ENCODE measurements at regions of chr15 and their contacts with region 1.

Region 1: GRCh38 chr15:62306851-62307504 is 141.9 kb upstream of the C2CD4B start:
- DNase-seq: peak; percentile 72
- H3K4me3 ChIP-seq: peak overlapping the region in 1 of 2 experiments; percentile 17; a peak in 1 of 4 replicates
- H3K27ac ChIP-seq: peak overlapping the region; percentile 28 to 61; a peak in 2 of 4 replicates
- H3K4me1 ChIP-seq: peaks cover 8 to 15% of the 10 kb centered on the region in 2 experiments
- H3K27me3 ChIP-seq: no peaks in the 10 kb centered on the region
- CTCF ChIP-seq: peak; percentile 78
- EP300 ChIP-seq: no peak
- RAD21 ChIP-seq: peak; percentile 92

Region 2: DNA sequence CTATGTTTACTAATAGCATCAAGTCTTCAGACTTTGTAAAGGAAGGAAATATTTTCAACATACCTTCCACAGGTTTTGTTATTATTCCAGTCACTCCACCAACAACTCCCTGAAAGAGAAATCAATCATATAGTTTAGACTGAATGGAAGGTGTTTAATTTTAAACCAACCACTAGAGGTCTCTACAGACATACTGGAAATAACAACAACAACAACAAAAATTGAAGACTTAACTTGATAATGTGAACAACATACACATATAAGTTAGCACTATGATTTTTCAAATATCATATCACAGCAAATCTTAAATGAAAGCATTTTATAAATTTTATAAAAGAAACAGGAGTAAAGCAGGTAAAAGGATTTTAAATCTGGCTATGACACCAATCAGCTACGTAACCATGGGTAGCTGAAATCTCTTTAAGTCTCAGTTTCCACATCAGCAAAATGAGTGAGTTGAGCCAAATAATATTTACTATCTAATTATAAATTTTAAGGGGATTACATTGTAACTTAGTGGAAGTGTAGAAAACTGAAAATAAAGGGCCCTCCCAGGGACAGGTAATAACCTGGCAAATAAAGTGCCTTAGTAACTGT is 435.0 kb before region 1 on chr15:
- CTCF ChIA-PET with region 1: interaction called, 17 read pairs
- POLR2A ChIA-PET with region 1: no interaction called
- DNase-seq: peak; percentile 11
- H3K4me3 ChIP-seq: no peak overlapping the region
- H3K27ac ChIP-seq: no peak overlapping the region
- H3K4me1 ChIP-seq: no peaks in the 10 kb centered on the region
- H3K27me3 ChIP-seq: no peaks in the 10 kb centered on the region
- CTCF ChIP-seq: peak; percentile 80
- EP300 ChIP-seq: no peak
- RAD21 ChIP-seq: peak; percentile 79

Region 3: DNA sequence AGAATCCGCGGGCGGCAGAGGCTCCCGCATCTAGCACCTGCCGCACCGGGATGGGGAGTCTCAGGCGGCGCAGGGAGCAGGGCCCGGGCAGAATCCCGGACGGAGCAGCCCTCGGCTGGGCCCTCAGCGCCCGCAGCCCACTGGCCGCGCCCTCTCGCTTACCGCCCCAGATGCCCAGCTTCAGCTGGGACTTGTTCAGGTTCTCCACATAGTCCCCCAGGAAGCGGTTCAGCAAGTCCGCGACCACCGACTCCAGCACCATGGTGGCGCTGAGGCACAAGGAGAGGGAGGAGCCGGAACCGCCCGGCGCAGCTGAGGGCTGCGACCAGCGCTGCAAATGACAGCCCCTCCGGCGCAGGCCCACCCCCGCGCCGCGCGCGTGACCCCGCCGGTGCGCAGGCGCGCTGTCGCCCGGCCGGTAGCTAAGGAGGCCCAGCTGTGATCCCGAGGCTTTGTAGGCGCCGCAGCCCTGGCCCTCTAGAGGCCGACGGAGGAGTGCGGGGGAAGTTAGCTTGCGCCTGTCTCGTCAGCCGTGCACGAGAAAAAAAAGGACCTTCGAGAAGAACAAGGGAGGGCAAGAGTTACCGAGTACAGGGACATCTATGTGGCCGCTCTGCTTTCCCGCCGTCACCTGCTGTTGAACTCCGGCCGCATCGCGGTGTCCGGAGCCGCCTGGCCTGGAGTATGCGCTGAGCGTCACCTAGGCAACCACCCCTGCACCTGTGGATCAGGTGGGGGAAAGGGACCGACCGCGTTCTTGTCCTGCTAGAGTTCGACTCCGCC is 246.7 kb before region 1 on chr15 and contains the start of gene VPS13C:
- CTCF ChIA-PET with region 1: interaction called, 27 read pairs
- POLR2A ChIA-PET with region 1: no interaction called
- DNase-seq: peak; percentile 98
- H3K4me3 ChIP-seq: peak within 1 kb of the TSS; percentile 74 to 92
- H3K27ac ChIP-seq: peak within 1 kb of the TSS; percentile 76 to 91
- H3K4me1 ChIP-seq: peaks cover 0 to 7% of the 10 kb centered on the region in 2 experiments; a peak in 2 of 4 replicates
- H3K27me3 ChIP-seq: no peaks in the 10 kb centered on the region
- CTCF ChIP-seq: peak; percentile 75
- EP300 ChIP-seq: 0 out of 4 replicates have a peak, but pooled peaks of 1 of the 2 experiments have one; percentile 12
- RAD21 ChIP-seq: peak; percentile 66
- polyA plus RNA-seq, gene VPS13C: 5.7 and 6.9 TPM in 2 replicates

Region 4: DNA sequence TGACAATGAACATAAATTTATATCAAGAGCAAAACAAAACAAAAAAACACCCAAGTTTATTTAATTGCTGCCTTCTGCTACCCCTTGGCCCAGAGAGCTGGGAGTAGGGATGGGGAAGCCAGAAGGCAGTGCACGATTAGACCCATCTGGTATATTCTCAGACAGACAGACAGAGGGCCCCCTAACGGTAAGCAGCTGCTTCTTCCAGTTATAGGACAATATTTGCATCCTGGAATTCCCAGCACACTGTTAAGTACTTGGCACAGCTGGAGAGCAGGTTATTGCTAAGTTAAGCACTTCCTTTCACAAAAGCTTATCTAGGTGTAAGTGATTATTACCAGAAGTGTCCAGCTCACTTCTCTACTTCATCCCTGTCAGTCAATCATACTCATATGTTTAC is 181.2 kb before region 1 on chr15:
- CTCF ChIA-PET with region 1: interaction called, 16 read pairs
- POLR2A ChIA-PET with region 1: no interaction called
- DNase-seq: peak; percentile 36
- H3K4me3 ChIP-seq: no peak overlapping the region
- H3K27ac ChIP-seq: no peak overlapping the region; a peak in 1 of 4 replicates
- H3K4me1 ChIP-seq: peaks cover 0 to 5% of the 10 kb centered on the region in 2 experiments; a peak in 2 of 4 replicates
- H3K27me3 ChIP-seq: no peaks in the 10 kb centered on the region
- CTCF ChIP-seq: peak; percentile 53
- EP300 ChIP-seq: no peak
- RAD21 ChIP-seq: peak; percentile 59

Region 5: DNA sequence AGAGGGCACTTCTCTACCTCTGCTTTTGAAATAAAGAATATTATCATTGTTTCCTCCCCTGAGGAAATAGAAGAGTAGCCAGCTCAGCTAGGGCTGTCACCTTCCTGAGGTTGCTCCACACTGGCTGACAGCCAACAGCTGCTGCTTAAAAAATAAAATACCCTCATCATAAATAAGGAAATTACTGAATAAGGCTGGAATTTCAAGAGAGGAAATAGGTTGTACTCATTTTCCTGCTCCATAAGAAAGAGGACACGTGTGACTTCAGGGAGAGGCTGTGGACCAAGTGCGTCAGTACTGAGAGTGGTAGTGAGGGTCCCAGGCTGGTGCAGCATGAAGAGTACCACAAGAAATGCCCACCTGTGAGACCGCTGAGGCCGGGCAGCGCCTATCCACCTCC is 133.8 kb before region 1 on chr15:
- CTCF ChIA-PET with region 1: no interaction called
- POLR2A ChIA-PET with region 1: no interaction called
- DNase-seq: no peak
- H3K4me3 ChIP-seq: no peak overlapping the region
- H3K27ac ChIP-seq: no peak overlapping the region
- H3K4me1 ChIP-seq: no peaks in the 10 kb centered on the region
- H3K27me3 ChIP-seq: no peaks in the 10 kb centered on the region; the same call in 1 of the 2 replicates
- CTCF ChIP-seq: no peak
- EP300 ChIP-seq: no peak
- RAD21 ChIP-seq: no peak

Region 6: DNA sequence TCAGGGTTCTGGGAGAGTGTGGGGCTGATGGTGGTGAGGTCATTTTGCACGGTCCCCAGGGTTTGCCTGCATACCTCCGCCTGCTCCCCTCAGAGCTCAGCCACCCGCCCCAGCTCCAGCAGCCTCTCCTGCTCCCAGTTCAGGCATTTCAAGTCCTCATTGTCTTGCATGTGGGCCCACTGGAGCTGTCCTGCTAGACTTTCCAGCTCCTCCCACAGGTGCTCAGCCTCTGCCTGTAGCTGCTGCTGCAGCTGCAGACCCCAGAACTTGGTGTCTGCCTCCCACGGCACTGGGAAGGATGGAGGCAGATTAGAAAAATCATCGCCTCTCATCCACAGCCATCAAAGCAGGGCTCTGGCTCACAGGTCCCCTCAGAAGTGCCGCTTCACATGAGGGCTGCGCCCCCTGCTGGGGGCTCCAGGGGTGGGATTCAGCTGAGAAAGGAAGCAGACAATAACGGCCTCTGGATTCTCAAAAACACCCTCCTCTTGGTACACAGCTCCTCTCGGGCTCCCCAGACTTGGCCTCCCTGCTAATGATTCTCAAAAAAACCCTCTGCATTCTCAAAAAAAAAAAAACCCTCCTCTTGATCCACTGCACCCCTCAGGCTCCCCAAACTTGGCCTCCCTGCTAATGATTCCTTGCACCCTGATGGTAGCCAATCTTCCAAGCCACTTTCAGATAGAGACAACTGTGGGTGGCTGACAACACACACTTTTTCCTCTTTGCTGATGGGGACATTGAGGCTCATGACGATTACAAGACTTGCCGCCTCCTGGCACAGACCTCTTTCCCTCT is 52.6 kb before region 1 on chr15:
- CTCF ChIA-PET with region 1: interaction called, 25 read pairs
- POLR2A ChIA-PET with region 1: no interaction called
- DNase-seq: peak; percentile 76
- H3K4me3 ChIP-seq: no peak overlapping the region; a peak in 1 of 4 replicates
- H3K27ac ChIP-seq: no peak overlapping the region
- H3K4me1 ChIP-seq: no peaks in the 10 kb centered on the region
- H3K27me3 ChIP-seq: no peaks in the 10 kb centered on the region; the same call in 1 of the 2 replicates
- CTCF ChIP-seq: peak; percentile 66
- EP300 ChIP-seq: no peak
- RAD21 ChIP-seq: peak; percentile 82

Region 7: DNA sequence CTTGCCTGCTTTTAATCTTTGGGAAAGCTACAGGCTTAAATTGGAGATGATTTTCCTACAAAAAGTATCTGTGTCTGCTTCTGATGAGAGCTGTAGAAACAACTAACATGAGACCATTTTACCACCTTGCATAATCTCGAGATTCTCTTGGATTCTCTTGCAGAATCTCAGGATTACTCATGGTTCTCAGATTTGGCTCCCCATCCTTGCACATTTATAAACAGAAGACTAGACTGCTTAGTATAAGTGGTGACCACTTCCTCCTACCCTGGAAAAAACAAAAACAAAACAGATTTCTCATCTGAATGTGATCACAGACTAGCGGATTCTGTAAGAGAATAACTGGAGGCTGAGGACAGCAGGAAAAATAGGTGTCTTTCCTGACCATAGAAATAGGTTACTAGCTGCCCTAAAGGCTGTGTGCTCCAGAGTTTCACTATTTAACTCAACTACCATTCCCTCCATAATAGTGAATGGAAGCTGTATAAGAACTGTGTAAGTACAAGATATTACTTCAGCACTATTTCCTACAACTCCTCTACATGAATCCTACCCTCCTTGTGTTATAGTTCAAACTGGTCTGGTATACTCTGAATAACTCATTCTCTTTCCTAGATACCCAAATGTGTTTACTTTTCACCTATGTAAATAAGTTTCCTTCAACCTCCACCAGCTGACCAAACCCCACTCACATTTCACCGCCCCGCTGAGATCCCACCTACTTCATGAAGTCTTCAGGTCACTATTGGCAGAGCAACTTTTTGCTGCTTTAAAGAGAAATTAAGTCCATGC is 19.7 kb before region 1 on chr15:
- CTCF ChIA-PET with region 1: interaction called, 14 read pairs
- POLR2A ChIA-PET with region 1: no interaction called
- DNase-seq: no peak
- H3K4me3 ChIP-seq: no peak overlapping the region
- H3K27ac ChIP-seq: no peak overlapping the region
- H3K4me1 ChIP-seq: no peaks in the 10 kb centered on the region
- H3K27me3 ChIP-seq: no peaks in the 10 kb centered on the region; the same call in 1 of the 2 replicates
- CTCF ChIP-seq: no peak
- EP300 ChIP-seq: no peak
- RAD21 ChIP-seq: no peak

Region 8: DNA sequence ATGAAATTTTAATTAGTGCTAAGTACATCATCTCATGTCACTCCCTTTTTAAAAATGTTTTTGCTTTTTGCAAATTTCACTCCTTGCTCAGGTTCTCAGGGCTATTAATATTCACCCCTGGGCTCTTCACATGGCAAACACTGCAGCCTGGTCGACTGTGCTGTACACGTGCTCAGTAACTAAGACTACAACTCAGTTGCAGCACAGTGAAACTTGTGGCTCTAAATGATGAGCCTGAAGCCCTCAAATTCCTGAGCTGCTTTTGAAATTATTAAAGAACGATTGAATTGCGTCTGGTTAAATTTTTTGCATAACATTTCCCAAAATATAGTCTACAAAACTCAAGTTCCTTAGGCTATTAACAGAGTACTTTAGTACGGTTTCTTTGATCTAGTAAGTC is 17.4 kb after region 1 on chr15:
- CTCF ChIA-PET with region 1: interaction called, 16 read pairs
- POLR2A ChIA-PET with region 1: no interaction called
- DNase-seq: no peak
- H3K4me3 ChIP-seq: no peak overlapping the region
- H3K27ac ChIP-seq: no peak overlapping the region
- H3K4me1 ChIP-seq: peaks cover 0 to 29% of the 10 kb centered on the region in 2 experiments; a peak in 2 of 4 replicates
- H3K27me3 ChIP-seq: no peaks in the 10 kb centered on the region
- CTCF ChIP-seq: no peak
- EP300 ChIP-seq: no peak
- RAD21 ChIP-seq: no peak